Activated T-helper 1 cell treated with anti-CD3 and anti-CD28 coated beads, Interleukin-12 subunit alpha, Interleukin-12 subunit beta, Interleukin-2, Interleukin-4 antibody, amounts not matched to agents 30 ng/mL and 10 ng/mL and 1 ng/mL, durations not matched to agents 14 hours and 24 hours and 36 hours (primary cell): ENCODE measurements at regions of chr6 and their contacts with region 1.

Region 1: GRCh38 chr6:39114704-39115599 is at the start of gene SAYSD1:
- DNase-seq: peak; percentile 92
- H3K4me3 Mint-ChIP-seq: peak within 1 kb of the TSS; percentile 95
- H3K27ac Mint-ChIP-seq: peak within 1 kb of the TSS; percentile 97
- H3K4me1 Mint-ChIP-seq: peaks cover 63% of the 10 kb centered on the region
- H3K27me3 Mint-ChIP-seq: no peaks in the 10 kb centered on the region
- total RNA-seq, gene SAYSD1: 12.1 and 12.9 TPM in 2 replicates

Region 2: DNA sequence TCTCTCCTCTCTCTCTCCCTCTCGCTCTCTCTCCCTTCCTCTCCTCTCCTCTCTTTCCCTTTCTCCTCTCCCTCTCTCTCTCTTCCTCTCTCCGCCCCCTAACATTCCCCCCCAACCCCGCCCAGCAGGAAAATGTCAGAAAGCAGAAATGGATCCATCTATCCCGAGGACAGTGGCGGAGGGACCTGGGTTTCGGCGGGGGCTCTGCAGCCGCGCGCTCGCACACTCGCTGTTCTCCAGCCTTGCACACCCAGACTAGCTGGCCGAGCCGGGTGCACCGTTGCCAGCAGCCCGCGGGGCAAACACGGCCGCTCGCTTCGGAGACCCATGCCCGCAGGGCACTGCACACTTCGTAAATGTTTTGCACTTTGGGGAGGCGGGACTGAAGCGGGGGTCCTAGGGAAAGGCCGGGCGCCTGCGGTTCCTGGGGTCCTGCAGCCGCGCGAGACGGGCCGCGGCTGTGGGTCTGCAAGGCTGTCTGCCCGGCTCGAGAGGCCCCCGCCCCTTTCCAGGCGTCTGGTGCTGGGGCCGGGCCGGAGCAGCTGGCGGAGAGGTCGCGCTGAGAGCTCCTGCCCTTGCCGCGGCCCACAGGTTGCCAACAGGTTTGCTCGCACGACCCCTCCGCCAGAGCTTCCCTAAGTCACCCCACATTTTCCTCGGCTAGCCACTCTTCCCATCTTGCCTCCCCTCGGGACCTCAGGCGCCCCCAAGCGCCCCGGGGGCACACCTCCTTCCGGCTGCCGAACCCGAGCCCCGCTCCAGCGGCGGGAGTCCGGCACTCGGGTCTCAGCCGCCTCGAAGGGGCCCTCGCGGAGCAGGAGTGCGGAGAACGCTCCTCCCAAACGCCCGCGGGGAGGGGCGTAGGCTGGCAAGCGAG is 1416.5 kb before region 1 on chr6:
- intact Hi-C with region 1: loop called (anchors 5 kb)
- DNase-seq: peak; percentile 58
- H3K4me3 Mint-ChIP-seq: peak overlapping the region; percentile 91
- H3K27ac Mint-ChIP-seq: peak overlapping the region; percentile 91
- H3K4me1 Mint-ChIP-seq: peaks cover 28% of the 10 kb centered on the region
- H3K27me3 Mint-ChIP-seq: peaks cover 34% of the 10 kb centered on the region

Region 3: GRCh38 chr6:38702558-38703397 is 412.2 kb before region 1 on chr6 and contains the start of gene GLO1:
- intact Hi-C with region 1: loop called (anchors 2 kb)
- DNase-seq: peak; percentile 95
- H3K4me3 Mint-ChIP-seq: peak within 1 kb of the TSS; percentile 91
- H3K27ac Mint-ChIP-seq: peak within 1 kb of the TSS; percentile 85
- H3K4me1 Mint-ChIP-seq: peaks cover 45% of the 10 kb centered on the region
- H3K27me3 Mint-ChIP-seq: peaks cover 7% of the 10 kb centered on the region
- total RNA-seq, gene GLO1: 109 and 110 TPM in 2 replicates

Region 4: GRCh38 chr6:39137245-39137644 is 22.3 kb after region 1 on chr6:
- intact Hi-C with region 1: loop called (anchors 2 kb)
- DNase-seq: peak; percentile 37
- H3K4me3 Mint-ChIP-seq: no peak overlapping the region
- H3K27ac Mint-ChIP-seq: no peak overlapping the region
- H3K4me1 Mint-ChIP-seq: no peaks in the 10 kb centered on the region
- H3K27me3 Mint-ChIP-seq: no peaks in the 10 kb centered on the region

Region 5: GRCh38 chr6:39263303-39264037 is 148.5 kb after region 1 on chr6:
- intact Hi-C with region 1: loop called (anchors 1 kb)
- DNase-seq: no peak
- H3K4me3 Mint-ChIP-seq: no peak overlapping the region
- H3K27ac Mint-ChIP-seq: peak overlapping the region; percentile 6
- H3K4me1 Mint-ChIP-seq: peaks cover 14% of the 10 kb centered on the region
- H3K27me3 Mint-ChIP-seq: peaks cover 1% of the 10 kb centered on the region